ENCODE measurements at regions of chr9 and their contacts with region 1.

Region 1: GRCh38 chr9:100714372-100715099 is 136.7 kb downstream of the CAVIN4 start:
- DNase-seq: peak; percentile 71
- H3K4me3 ChIP-seq: no peak overlapping the region
- H3K27ac ChIP-seq: no peak overlapping the region
- H3K4me1 ChIP-seq: no peaks in the 10 kb centered on the region
- H3K27me3 ChIP-seq: no peaks in the 10 kb centered on the region
- CTCF ChIP-seq: peak in 3 of 4 experiments; percentile 40 to 71 (median 56)
- EP300 ChIP-seq: no peak
- POLR2A ChIP-seq: no peak

Region 2: GRCh38 chr9:100739681-100740080 is 25.1 kb after region 1 on chr9:
- intact Hi-C with region 1: no loop called
- DNase-seq: no peak
- H3K4me3 ChIP-seq: no peak overlapping the region
- H3K27ac ChIP-seq: no peak overlapping the region
- H3K4me1 ChIP-seq: no peaks in the 10 kb centered on the region
- H3K27me3 ChIP-seq: no peaks in the 10 kb centered on the region
- CTCF ChIP-seq: no peak
- EP300 ChIP-seq: no peak
- POLR2A ChIP-seq: no peak

Region 3: GRCh38 chr9:101235105-101235866 is 520.8 kb after region 1 on chr9:
- intact Hi-C with region 1: loop called (anchors 10 kb)
- DNase-seq: no peak
- H3K4me3 ChIP-seq: no peak overlapping the region
- H3K27ac ChIP-seq: no peak overlapping the region
- H3K4me1 ChIP-seq: no peaks in the 10 kb centered on the region
- H3K27me3 ChIP-seq: no peaks in the 10 kb centered on the region
- CTCF ChIP-seq: no peak
- EP300 ChIP-seq: no peak
- POLR2A ChIP-seq: no peak

Region 4: GRCh38 chr9:101311758-101312420 is 597.4 kb after region 1 on chr9:
- intact Hi-C with region 1: loop called (anchors 5 kb)
- DNase-seq: no peak
- H3K4me3 ChIP-seq: no peak overlapping the region
- H3K27ac ChIP-seq: no peak overlapping the region
- H3K4me1 ChIP-seq: peaks cover 0 to 4% (median 0%) of the 10 kb centered on the region in 4 donors
- H3K27me3 ChIP-seq: no peaks in the 10 kb centered on the region
- CTCF ChIP-seq: peak in 3 of 4 experiments; percentile 40 to 70 (median 54)
- EP300 ChIP-seq: no peak
- POLR2A ChIP-seq: no peak

Measured in sigmoid colon (tissue), 7 donors.